ENCODE measurements at regions of chr11 and their contacts with region 1.

Region 1: DNA sequence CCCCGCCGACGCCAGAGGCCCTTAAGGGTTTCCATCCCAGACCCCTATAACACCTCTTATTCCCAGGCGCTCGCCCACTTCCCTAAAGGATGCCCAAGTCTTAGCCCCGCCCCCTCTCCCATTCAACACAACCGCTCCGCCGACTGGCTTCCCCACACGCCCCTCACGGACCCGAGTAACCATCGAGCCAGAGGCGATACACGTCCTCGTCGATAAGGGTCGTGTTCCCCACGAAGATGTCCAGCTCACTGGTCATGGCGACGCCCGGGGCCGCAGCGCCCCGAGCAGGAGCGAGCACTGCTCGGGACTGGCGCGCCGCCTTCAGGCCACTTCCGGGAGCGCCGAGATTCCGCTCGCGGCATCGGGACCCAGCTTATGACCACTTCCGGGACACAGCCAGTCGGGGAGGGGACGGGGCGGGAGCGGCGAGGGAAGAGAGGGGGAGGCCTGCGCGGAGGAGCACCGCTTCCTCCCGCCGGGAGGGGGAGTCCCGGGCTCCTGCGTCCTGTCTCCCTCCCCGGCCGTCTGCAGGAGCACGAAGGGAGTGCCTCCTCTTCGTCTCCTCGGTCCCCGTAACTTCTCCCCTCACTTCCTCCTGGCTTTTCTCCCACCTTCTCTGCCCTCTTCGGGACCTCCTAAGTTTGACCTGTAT is at the start of gene FIBP:
- DNase-seq: peak; percentile 88 to 97
- ATAC-seq: peak; percentile 60 to 79 (median 64)
- H3K4me3 ChIP-seq: peak within 1 kb of the TSS; percentile 72
- H3K4me3 Mint-ChIP-seq: peak within 1 kb of the TSS; percentile 88
- H3K27ac ChIP-seq: peak within 1 kb of the TSS; percentile 97
- H3K27ac Mint-ChIP-seq: peak within 1 kb of the TSS; percentile 88 to 96
- H3K4me1 ChIP-seq: peaks cover 72% of the 10 kb centered on the region
- H3K4me1 Mint-ChIP-seq: peaks cover 60 to 68% of the 10 kb centered on the region in 2 donors
- H3K27me3 ChIP-seq: no peaks in the 10 kb centered on the region
- H3K27me3 Mint-ChIP-seq: no peaks in the 10 kb centered on the region
- CTCF ChIP-seq: peak; percentile 90
- total RNA-seq, gene FIBP: 36.5 to 47.9 (median 45.7) TPM

Region 2: DNA sequence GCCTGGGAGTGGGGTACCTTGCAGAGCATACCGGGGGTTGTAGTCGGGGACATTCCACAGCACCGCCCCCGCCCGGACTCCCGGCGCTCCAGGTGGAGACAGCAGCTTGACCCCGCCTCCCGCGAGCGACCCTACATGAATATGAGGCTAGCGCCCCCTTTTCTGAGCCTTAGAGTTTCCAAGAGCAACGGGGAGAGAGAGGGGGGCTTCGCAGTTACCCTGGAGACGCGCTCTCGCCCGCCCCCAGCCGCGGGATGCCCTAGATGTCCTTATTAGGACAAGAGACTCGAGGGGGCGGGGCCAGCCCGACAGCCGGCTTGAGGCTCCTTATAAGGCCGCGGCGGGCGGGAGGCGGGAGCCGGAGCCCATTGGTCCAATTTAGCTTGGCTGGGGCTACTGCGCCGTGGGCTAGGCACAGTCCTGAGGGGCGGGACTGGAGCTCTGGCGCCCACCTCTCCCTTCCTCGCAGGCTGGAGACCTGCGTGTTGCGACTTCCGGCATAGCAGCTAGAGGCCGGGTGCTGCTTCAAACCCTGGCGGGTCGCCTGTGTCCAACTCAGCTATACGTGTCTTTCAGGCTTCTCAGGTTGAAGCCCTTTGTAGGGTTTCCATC is 29.0 kb before region 1 on chr11:
- intact Hi-C with region 1: loop called (anchors 1 kb)
- DNase-seq: peak; percentile 94 to 96
- ATAC-seq: peak; percentile 65 to 82 (median 66)
- H3K4me3 ChIP-seq: peak overlapping the region; percentile 80
- H3K4me3 Mint-ChIP-seq: peak overlapping the region; percentile 98
- H3K27ac ChIP-seq: peak overlapping the region; percentile 85
- H3K27ac Mint-ChIP-seq: peak overlapping the region; percentile 97 to 98
- H3K4me1 ChIP-seq: peaks cover 51% of the 10 kb centered on the region
- H3K4me1 Mint-ChIP-seq: peaks cover 51 to 64% of the 10 kb centered on the region in 2 donors
- H3K27me3 ChIP-seq: no peaks in the 10 kb centered on the region
- H3K27me3 Mint-ChIP-seq: no peaks in the 10 kb centered on the region
- CTCF ChIP-seq: no peak

Region 3: DNA sequence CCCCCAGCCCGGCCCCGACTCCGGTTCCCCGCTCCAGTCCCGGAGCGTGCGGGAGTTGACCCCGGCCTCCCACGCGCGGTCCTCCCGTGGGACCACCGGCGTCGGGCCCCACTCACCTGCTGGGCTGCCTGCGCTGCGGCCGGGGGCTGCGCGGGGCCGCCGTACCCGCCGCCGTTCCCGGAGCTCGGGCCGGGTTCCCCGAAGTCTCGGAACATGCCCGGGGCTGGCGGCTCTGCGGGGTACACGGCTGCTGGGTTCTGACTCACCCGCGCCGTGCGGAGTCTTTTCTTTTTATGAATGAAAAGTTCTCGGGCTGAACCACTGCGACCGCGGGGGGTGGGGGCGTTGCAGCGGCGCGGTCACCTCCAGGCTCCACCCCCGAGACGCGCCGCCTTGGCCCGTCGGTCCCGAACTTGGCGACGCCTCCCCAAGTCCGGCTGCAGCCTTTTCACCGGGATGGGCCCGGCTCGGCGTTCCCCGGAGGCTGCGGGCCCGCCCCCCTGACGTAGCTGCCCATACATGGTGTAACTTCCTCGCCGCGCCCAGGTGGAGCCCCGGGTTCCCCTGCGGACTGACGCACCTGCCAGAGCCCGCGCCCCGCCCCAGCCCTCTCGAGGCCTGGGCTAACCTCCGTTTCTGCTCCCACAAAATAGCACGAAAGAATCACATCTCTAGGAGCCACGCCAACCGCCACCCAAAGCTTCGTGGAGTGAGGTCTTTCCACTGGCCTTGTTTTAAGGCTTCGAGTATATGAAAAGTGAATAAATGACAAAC is 12.0 kb after region 1 on chr11 and contains the start of gene FOSL1:
- intact Hi-C with region 1: loop called (anchors 1 kb)
- DNase-seq: peak; percentile 91 to 96
- ATAC-seq: peak; percentile 66 to 86 (median 78)
- H3K4me3 ChIP-seq: peak within 1 kb of the TSS; percentile 30
- H3K4me3 Mint-ChIP-seq: peak within 1 kb of the TSS; percentile 72
- H3K27ac ChIP-seq: peak within 1 kb of the TSS; percentile 15
- H3K27ac Mint-ChIP-seq: peak within 1 kb of the TSS; percentile 90 to 98
- H3K4me1 ChIP-seq: peaks cover 38% of the 10 kb centered on the region
- H3K4me1 Mint-ChIP-seq: peaks cover 12 to 23% of the 10 kb centered on the region in 2 donors
- H3K27me3 ChIP-seq: peaks cover 5% of the 10 kb centered on the region
- H3K27me3 Mint-ChIP-seq: peaks cover 0 to 5% of the 10 kb centered on the region in 2 donors
- CTCF ChIP-seq: no peak
- total RNA-seq, gene FOSL1: 3.4 to 9.0 (median 6.8) TPM

Region 4: DNA sequence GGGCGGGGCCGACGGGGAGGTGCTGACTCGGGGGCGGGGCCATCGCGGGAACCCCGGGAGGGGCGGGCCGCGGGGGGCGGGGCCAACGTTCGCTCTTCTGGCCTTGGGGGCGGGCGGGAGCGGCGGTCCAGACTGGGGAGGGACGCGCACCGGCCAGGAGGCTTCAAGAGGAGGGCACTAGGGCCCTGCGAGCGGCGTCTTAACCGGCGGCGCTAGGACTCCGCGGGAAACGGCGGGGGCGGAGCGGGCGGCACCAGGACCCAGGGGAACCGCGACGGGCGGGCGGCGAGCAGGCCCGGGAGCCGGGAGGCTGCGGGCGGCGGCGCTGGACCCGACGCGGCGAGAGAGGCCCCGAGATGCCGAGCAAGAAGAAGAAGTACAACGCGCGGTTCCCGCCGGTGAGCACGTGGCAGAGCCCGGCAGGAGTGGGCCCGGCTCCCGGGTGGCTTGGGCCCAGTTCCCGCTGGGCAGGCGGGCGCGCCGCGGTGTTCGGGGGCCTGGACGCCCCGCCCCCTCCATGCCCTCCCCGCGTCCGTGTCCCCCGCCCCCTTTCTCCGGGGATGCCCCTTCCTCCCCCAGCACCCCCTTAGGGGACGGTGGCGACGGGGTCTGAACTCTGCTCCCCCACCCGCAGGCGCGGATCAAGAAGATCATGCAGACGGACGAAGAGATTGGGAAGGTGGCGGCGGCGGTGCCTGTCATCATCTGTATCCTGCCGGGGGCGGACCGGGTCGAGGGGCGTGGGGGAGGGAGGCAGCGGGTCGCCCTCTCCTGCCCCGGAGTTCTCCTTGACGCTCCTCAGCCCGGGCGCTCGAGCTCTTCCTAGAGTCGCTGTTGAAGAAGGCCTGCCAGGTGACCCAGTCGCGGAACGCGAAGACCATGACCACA is 31.1 kb after region 1 on chr11 and contains the start of gene DRAP1:
- intact Hi-C with region 1: loop called (anchors 2 kb)
- DNase-seq: peak; percentile 97 to 98
- ATAC-seq: peak; percentile 88 to 97 (median 90)
- H3K4me3 ChIP-seq: peak within 1 kb of the TSS; percentile 96
- H3K4me3 Mint-ChIP-seq: peak within 1 kb of the TSS; percentile 90
- H3K27ac ChIP-seq: peak within 1 kb of the TSS; percentile 79
- H3K27ac Mint-ChIP-seq: peak within 1 kb of the TSS; percentile 77 to 90
- H3K4me1 ChIP-seq: peaks cover 57% of the 10 kb centered on the region
- H3K4me1 Mint-ChIP-seq: peaks cover 24 to 52% of the 10 kb centered on the region in 2 donors
- H3K27me3 ChIP-seq: no peaks in the 10 kb centered on the region
- H3K27me3 Mint-ChIP-seq: no peaks in the 10 kb centered on the region
- CTCF ChIP-seq: no peak
- total RNA-seq, gene DRAP1: 114 to 115 (median 115) TPM